ENCODE measurements at regions of chr19 and their contacts with region 1.

Region 1: GRCh38 chr19:38676023-38676877 is 28.8 kb downstream of the ACTN4 start:
- DNase-seq: peak; percentile 62 to 96 (median 83)
- ATAC-seq: peak; percentile 90
- H3K4me3 ChIP-seq: no peak overlapping the region; the same call in 1 of the 2 replicates
- H3K27ac ChIP-seq: peak overlapping the region; percentile 89
- H3K4me1 ChIP-seq: peaks cover 53 to 79% of the 10 kb centered on the region in 2 experiments
- H3K27me3 ChIP-seq: no peaks in the 10 kb centered on the region
- CTCF ChIP-seq: peak; percentile 30 to 42 (median 32); a peak in 3 of 6 replicates
- EP300 ChIP-seq: peak; percentile 99
- POLR2A ChIP-seq: no peak
- RAD21 ChIP-seq: peak in 1 of 2 experiments; percentile 57; a peak in 3 of 4 replicates

Region 2: GRCh38 chr19:38451639-38452038 is 224.6 kb before region 1 on chr19:
- CTCF ChIA-PET with region 1: no interaction called
- POLR2A ChIA-PET with region 1: no interaction called
- in situ Hi-C with region 1: no loop called
- intact Hi-C with region 1: no loop called
- DNase-seq: no peak
- ATAC-seq: no peak
- H3K4me3 ChIP-seq: no peak overlapping the region
- H3K27ac ChIP-seq: no peak overlapping the region
- H3K4me1 ChIP-seq: peaks cover 5 to 26% of the 10 kb centered on the region in 2 experiments
- H3K27me3 ChIP-seq: no peaks in the 10 kb centered on the region
- CTCF ChIP-seq: 0 out of 6 replicates have a peak, but pooled peaks of 1 of the 3 experiments have one; percentile 4
- EP300 ChIP-seq: no peak
- POLR2A ChIP-seq: no peak
- RAD21 ChIP-seq: no peak

Region 3: DNA sequence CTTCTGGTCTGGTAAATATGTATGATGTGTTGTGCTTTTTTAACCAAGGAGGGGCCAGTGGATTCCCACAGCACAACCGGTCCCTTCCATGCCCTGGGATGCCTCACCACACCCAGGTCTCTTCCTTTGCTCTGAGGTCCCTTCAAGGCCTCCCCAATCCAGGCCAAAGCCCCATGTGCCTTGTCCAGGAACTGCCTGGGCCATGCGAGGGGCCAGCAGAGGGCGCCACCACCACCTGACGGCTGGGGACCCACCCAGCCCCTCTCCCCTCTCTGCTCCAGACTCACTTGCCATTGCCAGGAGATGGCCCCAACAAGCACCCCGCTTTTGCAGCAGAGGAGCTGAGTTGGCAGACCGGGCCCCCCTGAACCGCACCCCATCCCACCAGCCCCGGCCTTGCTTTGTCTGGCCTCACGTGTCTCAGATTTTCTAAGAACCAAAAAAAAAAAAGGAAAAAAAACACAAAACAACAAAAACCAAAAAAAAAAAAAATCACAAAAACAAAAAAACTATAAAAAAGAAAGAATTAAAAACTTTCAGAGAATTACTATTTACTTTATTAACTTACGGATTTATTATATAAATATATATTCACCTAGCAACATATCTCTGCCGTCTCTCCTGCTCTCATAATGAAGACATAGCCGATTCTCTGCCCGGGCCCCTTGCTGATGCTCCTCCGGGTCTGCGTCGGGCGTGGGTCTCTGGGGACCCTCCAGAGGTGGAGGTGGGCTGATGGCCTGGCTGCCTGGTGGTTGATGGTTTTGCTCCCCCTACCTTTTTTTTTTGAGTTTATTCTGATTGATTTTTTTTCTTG is 53.6 kb after region 1 on chr19:
- CTCF ChIA-PET with region 1: no interaction called
- POLR2A ChIA-PET with region 1: interaction called, 3 read pairs
- in situ Hi-C with region 1: no loop called
- intact Hi-C with region 1: loop called (anchors 5 kb)
- DNase-seq: peak; percentile 66 to 87 (median 72)
- ATAC-seq: peak; percentile 91
- H3K4me3 ChIP-seq: no peak overlapping the region
- H3K27ac ChIP-seq: peak overlapping the region; percentile 49; the same call in 1 of the 3 replicates
- H3K4me1 ChIP-seq: peaks cover 19 to 61% of the 10 kb centered on the region in 2 experiments
- H3K27me3 ChIP-seq: no peaks in the 10 kb centered on the region
- CTCF ChIP-seq: peak; percentile 84 to 96 (median 88)
- EP300 ChIP-seq: no peak
- POLR2A ChIP-seq: no peak
- RAD21 ChIP-seq: peak; percentile 61 to 75

Measured in K562 (cell line).